ENCODE measurements at regions of chr5 and their contacts with region 1.

Region 1: DNA sequence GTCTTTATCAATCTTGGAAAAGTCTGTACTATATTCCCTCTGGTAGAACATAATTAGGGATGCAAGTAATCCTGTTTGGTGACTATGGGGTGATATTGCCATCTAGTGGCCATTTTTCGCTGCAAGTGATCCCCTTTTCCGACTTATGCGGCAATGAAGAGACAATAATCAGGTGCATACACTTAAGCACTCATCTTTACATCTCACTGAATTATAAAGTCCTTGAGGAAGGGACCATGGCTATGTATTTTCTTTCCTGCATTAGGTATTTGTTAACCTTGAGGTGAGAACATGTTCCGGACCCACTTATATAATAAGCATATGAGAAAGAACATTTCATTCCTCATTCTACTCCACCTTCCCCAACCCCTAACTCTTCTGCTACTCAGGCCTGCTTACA is 19.6 kb upstream of the LIX1 start:
- DNase-seq: peak; percentile 70
- ATAC-seq: peak; percentile 35
- H3K4me3 Mint-ChIP-seq: no peak overlapping the region
- H3K27ac Mint-ChIP-seq: no peak overlapping the region
- H3K4me1 Mint-ChIP-seq: peaks cover 15% of the 10 kb centered on the region
- H3K27me3 Mint-ChIP-seq: no peaks in the 10 kb centered on the region
- CTCF ChIP-seq: peak; percentile 95

Region 2: DNA sequence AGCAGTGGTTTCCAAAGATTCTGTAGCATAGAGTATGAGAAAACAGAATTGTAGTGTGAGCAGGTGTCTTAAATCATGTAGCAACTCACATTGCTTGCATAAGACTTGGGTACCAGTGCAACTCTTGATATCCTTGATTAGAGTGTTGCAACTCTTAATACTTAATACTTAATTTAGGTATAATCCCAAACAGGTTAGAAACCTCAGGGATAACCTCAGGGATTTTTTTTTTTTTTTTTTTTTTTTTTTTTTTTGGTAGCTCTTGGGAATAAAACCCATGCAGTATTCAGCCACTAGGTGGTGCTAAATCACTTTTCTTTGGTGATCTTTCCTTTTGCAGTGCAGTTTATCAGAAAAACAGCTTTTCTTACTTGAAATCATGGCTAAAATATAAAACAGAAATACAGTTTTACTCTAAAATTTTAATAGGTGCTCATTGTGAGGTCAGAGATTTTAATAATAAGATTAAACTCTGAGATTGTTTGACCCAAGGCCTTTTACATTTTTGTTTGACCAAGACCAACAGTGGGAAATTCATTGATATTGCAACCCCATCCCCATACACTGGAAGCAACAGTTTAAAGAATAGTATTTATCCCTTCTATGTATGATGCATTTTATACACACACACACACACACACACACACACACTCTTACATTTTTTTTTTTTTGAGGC is 409.6 kb before region 1 on chr5:
- CTCF ChIA-PET with region 1: interaction called, 52 read pairs
- POLR2A ChIA-PET with region 1: no interaction called
- intact Hi-C with region 1: loop called (anchors 2 kb)
- DNase-seq: peak; percentile 44
- ATAC-seq: no peak
- H3K4me3 Mint-ChIP-seq: no peak overlapping the region
- H3K27ac Mint-ChIP-seq: no peak overlapping the region
- H3K4me1 Mint-ChIP-seq: peaks cover 13% of the 10 kb centered on the region
- H3K27me3 Mint-ChIP-seq: no peaks in the 10 kb centered on the region
- CTCF ChIP-seq: peak; percentile 88

Region 3: DNA sequence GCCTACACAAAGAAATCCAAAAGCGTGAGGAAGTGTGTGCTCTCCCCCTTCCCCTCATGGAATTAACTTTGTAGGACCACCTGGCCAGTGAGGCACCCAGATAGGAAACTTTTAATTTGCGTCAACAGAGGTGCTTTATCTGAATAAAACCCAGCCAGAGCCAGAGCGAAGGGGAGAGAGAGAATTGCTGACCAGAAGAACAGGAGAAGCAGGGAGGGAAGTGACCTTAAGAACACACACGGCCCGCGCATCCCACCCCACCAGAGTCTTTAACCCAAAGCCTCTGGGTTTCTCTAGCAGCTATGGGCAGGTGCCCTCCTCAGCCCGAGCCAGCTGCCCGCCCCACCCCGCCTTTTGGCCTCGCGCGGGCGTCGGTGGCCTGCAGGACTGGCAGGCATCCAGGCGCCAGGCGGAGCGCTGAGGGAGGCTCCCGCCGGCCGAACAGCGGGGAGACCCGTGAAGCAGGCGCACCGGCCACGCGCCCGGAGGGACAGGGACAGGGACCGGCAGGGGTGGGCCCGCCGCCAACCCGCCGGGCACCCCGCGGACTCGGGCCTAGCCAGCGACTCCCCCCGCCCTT is 354.9 kb before region 1 on chr5:
- CTCF ChIA-PET with region 1: interaction called, 15 read pairs
- POLR2A ChIA-PET with region 1: interaction called, 4 read pairs
- intact Hi-C with region 1: no loop called
- DNase-seq: peak; percentile 49
- ATAC-seq: peak; percentile 5
- H3K4me3 Mint-ChIP-seq: peak overlapping the region; percentile 97
- H3K27ac Mint-ChIP-seq: peak overlapping the region; percentile 98
- H3K4me1 Mint-ChIP-seq: peaks cover 66% of the 10 kb centered on the region
- H3K27me3 Mint-ChIP-seq: no peaks in the 10 kb centered on the region
- CTCF ChIP-seq: no peak

Region 4: GRCh38 chr5:97009212-97009898 is 152.7 kb before region 1 on chr5:
- CTCF ChIA-PET with region 1: interaction called, 8 read pairs
- POLR2A ChIA-PET with region 1: no interaction called
- intact Hi-C with region 1: loop called (anchors 5 kb)
- DNase-seq: no peak
- ATAC-seq: peak; percentile 71
- H3K4me3 Mint-ChIP-seq: no peak overlapping the region
- H3K27ac Mint-ChIP-seq: peak overlapping the region; percentile 77
- H3K4me1 Mint-ChIP-seq: peaks cover 30% of the 10 kb centered on the region
- H3K27me3 Mint-ChIP-seq: no peaks in the 10 kb centered on the region
- CTCF ChIP-seq: no peak

Region 5: GRCh38 chr5:97098922-97099321 is 63.1 kb before region 1 on chr5:
- CTCF ChIA-PET with region 1: interaction called, 10 read pairs
- POLR2A ChIA-PET with region 1: no interaction called
- intact Hi-C with region 1: no loop called
- DNase-seq: no peak
- ATAC-seq: no peak
- H3K4me3 Mint-ChIP-seq: no peak overlapping the region
- H3K27ac Mint-ChIP-seq: no peak overlapping the region
- H3K4me1 Mint-ChIP-seq: peaks cover 11% of the 10 kb centered on the region
- H3K27me3 Mint-ChIP-seq: peaks cover 10% of the 10 kb centered on the region
- CTCF ChIP-seq: no peak

Region 6: DNA sequence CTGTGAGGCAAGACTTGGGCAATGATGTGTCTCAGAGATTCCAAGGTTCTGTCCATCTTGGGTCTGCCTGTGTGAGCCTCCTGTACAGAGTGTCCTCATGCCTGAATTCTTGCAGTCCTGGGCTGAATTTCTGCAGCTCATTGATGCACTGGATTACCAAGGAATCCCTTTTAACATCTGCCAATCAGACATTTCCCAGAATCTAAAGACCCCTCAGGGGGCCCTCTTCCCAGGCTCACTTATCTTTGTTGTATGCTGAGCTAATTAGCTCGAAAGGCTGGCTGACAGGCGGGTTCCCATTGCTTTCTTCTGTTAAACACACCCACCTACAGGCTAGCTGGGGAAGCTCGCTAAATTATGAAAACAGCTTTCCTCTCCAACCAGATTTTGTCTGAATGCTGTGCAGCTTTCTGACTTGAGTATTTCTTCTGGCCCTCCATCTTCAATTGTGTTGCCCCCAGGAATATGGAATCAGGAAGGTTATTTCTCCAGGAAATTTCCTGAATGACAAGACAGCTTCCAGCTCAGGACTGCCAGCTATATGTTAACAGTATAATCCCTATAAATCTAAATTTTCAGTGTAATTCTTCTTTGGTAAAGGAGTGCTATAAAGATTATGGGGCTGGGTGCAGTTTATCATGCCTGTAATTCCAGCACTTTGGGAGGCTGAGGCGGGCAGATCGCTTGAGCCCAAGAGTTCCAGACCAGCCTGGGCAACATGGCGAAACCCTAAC is 19.4 kb before region 1 on chr5 and contains the start of gene LIX1:
- CTCF ChIA-PET with region 1: interaction called, 83 read pairs
- POLR2A ChIA-PET with region 1: no interaction called
- intact Hi-C with region 1: no loop called
- DNase-seq: peak; percentile 57
- ATAC-seq: peak; percentile 86
- H3K4me3 Mint-ChIP-seq: no peak within 1 kb of the TSS
- H3K27ac Mint-ChIP-seq: no peak within 1 kb of the TSS
- H3K4me1 Mint-ChIP-seq: no peaks in the 10 kb centered on the region
- H3K27me3 Mint-ChIP-seq: peaks cover 8% of the 10 kb centered on the region
- CTCF ChIP-seq: peak; percentile 63
- total RNA-seq, gene LIX1: not detected

Region 7: DNA sequence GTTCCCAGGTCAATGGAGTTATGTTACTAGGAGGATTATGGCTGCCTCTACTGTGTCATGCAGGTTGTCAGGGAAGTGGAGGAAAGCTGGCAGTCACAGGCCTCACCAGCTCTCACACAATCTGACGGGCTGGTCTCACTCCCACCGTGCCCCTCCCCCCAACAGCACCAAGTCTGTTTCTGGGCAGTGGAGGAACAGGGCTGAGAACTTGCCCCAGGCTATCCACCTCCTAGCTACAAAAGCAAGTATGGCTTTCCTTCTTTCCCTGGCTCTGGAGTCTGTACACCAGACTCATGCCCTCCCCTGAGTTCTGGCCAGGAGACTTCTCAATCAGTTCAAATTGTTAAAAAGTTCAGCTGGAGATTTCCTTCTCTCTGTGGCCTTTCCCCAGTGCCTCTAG is 46.7 kb after region 1 on chr5:
- CTCF ChIA-PET with region 1: no interaction called
- POLR2A ChIA-PET with region 1: no interaction called
- intact Hi-C with region 1: no loop called
- DNase-seq: no peak
- ATAC-seq: no peak
- H3K4me3 Mint-ChIP-seq: no peak overlapping the region
- H3K27ac Mint-ChIP-seq: no peak overlapping the region
- H3K4me1 Mint-ChIP-seq: no peaks in the 10 kb centered on the region
- H3K27me3 Mint-ChIP-seq: peaks cover 11% of the 10 kb centered on the region
- CTCF ChIP-seq: no peak

Region 8: DNA sequence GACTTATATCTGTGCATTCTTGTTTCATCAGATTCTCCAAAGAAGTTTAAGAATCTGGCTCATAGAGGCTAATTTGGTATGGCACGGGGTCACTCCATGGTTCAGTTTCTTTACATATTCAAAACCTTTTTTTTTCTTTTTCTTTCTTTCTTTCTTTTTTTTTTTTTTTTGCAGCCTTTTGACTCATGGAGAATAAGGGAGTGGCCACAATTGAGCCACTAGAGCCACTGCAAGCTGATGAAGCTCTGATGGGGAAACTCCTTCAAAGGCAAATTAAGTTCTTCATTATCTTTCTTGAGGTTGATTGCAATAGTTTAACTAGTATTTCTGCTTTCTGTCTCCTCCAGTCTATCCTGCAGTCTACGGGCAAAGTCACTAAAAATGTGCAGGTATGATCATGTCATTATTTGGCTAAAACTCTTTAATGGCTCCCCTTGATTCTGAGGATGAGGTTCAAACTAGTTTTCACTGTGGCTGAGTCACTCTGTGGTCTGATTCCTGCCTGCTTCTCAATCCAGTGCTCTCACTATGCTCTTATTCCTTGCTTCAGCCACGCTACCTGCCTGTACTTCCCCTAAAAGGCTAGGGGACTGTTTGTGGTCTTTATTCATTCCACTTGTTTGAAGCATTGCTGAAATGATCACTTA is 114.6 kb after region 1 on chr5:
- CTCF ChIA-PET with region 1: no interaction called
- POLR2A ChIA-PET with region 1: no interaction called
- intact Hi-C with region 1: no loop called
- DNase-seq: no peak
- ATAC-seq: no peak
- H3K4me3 Mint-ChIP-seq: no peak overlapping the region
- H3K27ac Mint-ChIP-seq: no peak overlapping the region
- H3K4me1 Mint-ChIP-seq: no peaks in the 10 kb centered on the region
- H3K27me3 Mint-ChIP-seq: no peaks in the 10 kb centered on the region
- CTCF ChIP-seq: no peak